Common myeloid progenitor, CD34-positive (primary cell): ENCODE measurements at regions of chr12 and their contacts with region 1.

Region 1: DNA sequence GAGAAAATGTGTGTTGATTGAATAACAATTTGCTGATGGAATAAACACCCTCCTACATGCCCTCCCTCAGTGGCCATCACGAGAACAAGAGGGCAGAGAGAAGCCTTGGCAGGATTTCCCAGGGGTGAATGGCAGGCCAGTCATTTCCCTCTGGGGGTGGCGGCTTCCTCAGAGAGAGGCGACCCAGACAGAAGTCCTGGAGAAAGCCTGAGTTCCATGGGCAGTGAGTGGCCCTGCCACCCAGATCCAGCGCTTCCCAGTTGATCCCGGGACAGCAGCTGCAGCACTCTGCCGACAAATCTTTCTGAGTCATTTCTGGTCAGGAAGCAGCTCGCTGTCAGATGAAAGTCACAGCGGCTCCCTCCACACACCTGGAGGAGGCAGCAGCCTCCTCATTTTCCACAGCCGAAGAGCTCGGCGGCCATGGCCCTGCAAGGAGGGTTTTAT is 123.0 kb downstream of the SCARB1 start:
- DNase-seq: peak in 2 of 3 donors; percentile 49 to 62
- H3K4me3 ChIP-seq: peak overlapping the region in 3 of 7 experiments; percentile 5 to 52 (median 41)
- H3K27ac ChIP-seq: no peak overlapping the region
- H3K4me1 ChIP-seq: peaks cover 0 to 35% (median 16%) of the 10 kb centered on the region in 4 experiments
- H3K27me3 ChIP-seq: no peaks in the 10 kb centered on the region

Region 2: GRCh38 chr12:124754949-124755800 is 14.5 kb after region 1 on chr12:
- CTCF ChIA-PET with region 1: interaction called, 10 read pairs
- POLR2A ChIA-PET with region 1: no interaction called
- DNase-seq: peak; percentile 71 to 90 (median 87)
- H3K4me3 ChIP-seq: peak overlapping the region in 4 of 7 experiments; percentile 3 to 31 (median 26)
- H3K27ac ChIP-seq: peak overlapping the region in 1 of 2 experiments; percentile 14
- H3K4me1 ChIP-seq: peaks cover 0 to 47% (median 41%) of the 10 kb centered on the region in 4 experiments
- H3K27me3 ChIP-seq: no peaks in the 10 kb centered on the region